BJ (cell line): ENCODE measurements at regions of chr2 and their contacts with region 1.

Region 1: GRCh38 chr2:232521959-232522622 is 1.9 kb downstream of the PRSS56 start:
- DNase-seq: no peak
- H3K4me3 ChIP-seq: no peak overlapping the region
- H3K27me3 ChIP-seq: peaks cover 35% of the 10 kb centered on the region
- CTCF ChIP-seq: peak; percentile 27; the same call in 1 of the 2 replicates

Region 2: GRCh38 chr2:232013701-232014353 is 508.3 kb before region 1 on chr2:
- CTCF ChIA-PET with region 1: no interaction called
- POLR2A ChIA-PET with region 1: no interaction called
- DNase-seq: peak; percentile 85
- H3K4me3 ChIP-seq: no peak overlapping the region
- H3K27me3 ChIP-seq: no peaks in the 10 kb centered on the region
- CTCF ChIP-seq: no peak

Region 3: GRCh38 chr2:232438951-232439757 is 82.9 kb before region 1 on chr2:
- CTCF ChIA-PET with region 1: interaction called, 11 read pairs
- POLR2A ChIA-PET with region 1: no interaction called
- DNase-seq: no peak
- H3K4me3 ChIP-seq: no peak overlapping the region
- H3K27me3 ChIP-seq: peaks cover 1% of the 10 kb centered on the region; the same call in 1 of the 2 replicates
- CTCF ChIP-seq: peak; percentile 49; the same call in 1 of the 2 replicates

Region 4: DNA sequence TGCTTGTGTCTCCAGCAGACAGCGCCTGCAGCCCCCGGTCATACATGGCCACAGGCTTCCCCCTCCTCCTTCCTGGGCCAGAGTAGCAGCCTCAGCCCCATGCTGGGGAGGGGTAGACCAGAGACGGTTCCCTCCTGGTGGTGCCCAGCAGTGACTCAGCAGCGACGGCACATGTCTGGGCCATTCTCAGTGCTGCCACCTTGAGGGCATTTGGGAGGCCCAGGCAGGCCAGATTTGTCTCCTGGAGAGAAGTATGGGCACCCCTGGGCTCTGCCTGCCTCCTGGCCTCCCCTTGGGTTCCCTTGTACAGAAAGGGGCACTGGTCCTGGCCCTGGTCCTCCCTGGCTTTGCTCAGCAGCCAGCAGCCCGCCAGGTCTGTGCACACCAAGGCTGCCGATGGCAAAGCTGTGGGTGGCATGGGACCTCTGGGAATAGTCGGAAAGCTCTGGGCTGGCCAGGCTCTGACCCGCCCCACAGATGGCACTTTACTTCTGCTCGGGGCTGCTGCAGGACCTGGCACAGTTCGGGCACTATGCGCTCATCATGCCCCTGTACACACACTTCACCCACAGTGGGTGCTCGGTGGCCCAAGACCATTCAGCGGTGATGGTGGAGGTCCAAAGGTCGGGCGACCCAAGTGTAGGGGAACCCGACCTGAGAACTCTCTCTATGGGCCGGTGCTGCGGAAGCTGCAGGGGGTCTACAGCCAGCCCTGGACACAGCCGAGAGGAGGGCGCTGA is 77.5 kb before region 1 on chr2:
- CTCF ChIA-PET with region 1: interaction called, 11 read pairs
- POLR2A ChIA-PET with region 1: no interaction called
- DNase-seq: no peak
- H3K4me3 ChIP-seq: no peak overlapping the region
- H3K27me3 ChIP-seq: peaks cover 1% of the 10 kb centered on the region
- CTCF ChIP-seq: peak; percentile 79

Region 5: DNA sequence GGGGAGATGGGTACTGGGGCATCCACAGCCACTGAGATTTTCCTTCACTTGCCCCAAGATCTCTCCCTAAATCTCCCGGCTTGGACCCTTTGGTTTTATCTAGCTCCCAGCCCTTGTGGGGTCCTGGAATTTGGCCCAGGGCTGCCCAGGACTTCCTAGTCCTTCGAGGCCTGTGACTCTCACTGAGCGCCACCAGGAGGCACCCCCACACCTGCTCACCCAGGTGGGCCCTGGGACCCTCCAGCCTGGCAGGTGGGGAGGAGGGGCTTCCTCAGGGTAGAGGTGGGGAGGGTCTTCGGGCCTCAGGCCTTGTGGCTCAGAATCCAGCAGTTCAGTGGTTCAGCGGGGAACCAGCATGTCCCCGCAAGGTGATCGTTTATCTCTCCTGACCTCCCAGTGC is 13.8 kb before region 1 on chr2:
- CTCF ChIA-PET with region 1: interaction called, 15 read pairs
- POLR2A ChIA-PET with region 1: no interaction called
- DNase-seq: no peak
- H3K4me3 ChIP-seq: no peak overlapping the region
- H3K27me3 ChIP-seq: peaks cover 30% of the 10 kb centered on the region
- CTCF ChIP-seq: no peak

Region 6: DNA sequence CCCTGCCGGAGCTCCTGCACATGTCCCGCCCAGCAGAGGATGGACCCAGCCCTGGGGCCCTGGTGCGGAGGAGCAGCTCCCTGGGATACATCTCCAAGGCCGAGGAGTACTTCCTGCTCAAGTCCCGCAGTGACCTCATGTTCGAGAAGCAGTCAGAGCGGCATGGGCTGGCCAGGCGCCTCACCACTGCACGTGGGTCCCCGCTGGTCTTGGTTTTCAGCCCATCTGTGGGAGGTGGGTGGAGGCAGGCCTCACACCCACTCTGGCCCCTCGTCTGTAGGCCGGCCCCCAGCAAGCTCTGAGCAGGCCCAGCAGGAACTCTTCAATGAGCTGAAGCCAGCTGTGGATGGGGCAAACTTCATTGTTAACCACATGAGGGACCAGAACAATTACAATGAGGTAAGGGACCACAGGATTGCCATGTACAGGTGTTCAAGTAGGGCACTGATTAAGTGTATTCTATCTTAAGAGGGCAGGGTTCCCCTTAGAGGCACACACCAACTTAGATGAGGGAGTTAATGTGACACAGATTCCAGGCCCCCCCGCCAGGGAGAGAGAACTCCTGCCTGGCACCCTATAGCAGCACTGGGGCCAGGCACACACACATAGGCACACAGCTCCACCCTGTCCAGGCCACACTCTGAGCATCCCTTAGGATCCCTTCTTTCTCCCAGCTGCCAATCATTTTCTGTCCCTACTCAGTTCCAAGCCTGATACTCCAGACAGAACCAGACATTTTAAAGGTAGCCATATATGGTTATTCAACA is 12.0 kb after region 1 on chr2:
- CTCF ChIA-PET with region 1: interaction called, 29 read pairs
- POLR2A ChIA-PET with region 1: no interaction called
- DNase-seq: no peak
- H3K4me3 ChIP-seq: no peak overlapping the region
- H3K27me3 ChIP-seq: no peaks in the 10 kb centered on the region; the same call in none of the 2 replicates
- CTCF ChIP-seq: no peak

Region 7: GRCh38 chr2:232568161-232568560 is 46.1 kb after region 1 on chr2:
- CTCF ChIA-PET with region 1: no interaction called
- POLR2A ChIA-PET with region 1: no interaction called
- DNase-seq: peak; percentile 80
- H3K4me3 ChIP-seq: no peak overlapping the region
- H3K27me3 ChIP-seq: no peaks in the 10 kb centered on the region
- CTCF ChIP-seq: no peak